ENCODE measurements at regions of chr1 and their contacts with region 1.

Region 1: GRCh38 chr1:202968840-202969295 is 1.8 kb upstream of the CYB5R1 start:
- DNase-seq: peak; percentile 40 to 55
- ATAC-seq: peak in 1 of 2 donors; percentile 26
- H3K4me3 ChIP-seq: no peak overlapping the region
- H3K27ac ChIP-seq: peak overlapping the region; percentile 98 to 100 (median 100)
- H3K4me1 ChIP-seq: peaks cover 29 to 34% of the 10 kb centered on the region in 2 donors
- H3K27me3 ChIP-seq: no peaks in the 10 kb centered on the region
- CTCF ChIP-seq: peak; percentile 37 to 66 (median 56)
- POLR2A ChIP-seq: no peak

Region 2: DNA sequence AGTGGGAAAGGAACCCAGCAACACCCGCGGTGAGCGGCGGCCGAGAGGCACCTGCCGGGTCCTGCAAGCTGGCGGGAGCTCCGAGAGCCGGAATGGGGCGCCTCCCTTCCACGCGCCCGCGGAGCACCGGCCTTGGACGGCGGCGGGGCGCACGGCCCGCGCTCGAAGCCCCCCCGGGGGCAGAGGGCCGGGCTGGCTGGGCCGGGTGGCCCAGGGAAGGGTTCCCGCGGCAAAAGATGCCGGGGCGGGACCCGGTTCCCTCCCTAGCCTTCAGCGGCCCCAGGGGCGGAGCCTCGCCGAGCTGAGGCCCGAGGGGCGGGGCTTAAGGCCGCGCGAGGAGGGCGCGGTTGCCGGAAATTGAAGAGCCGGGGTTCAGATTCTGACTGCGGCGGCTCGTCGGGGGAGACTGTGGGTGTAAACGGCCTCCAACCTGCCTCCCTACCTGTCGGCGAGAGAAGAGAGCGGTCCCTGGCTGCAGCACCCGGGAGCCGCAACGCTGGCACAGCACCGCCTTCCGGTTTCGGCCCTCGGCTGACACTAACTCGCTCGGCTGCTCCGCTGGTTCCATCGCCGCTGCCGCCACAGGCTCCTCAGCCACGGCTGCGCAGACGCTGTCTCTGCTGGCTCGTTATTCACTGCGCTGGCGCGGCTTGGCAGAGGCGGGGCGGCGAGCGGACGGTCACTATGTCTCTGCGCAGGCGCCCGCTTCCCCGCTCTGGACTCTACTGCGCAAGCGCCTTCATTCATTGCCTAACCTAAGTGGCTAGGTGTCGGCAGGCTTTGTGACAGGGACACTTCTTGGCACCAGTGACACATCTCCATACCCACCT is 80.1 kb before region 1 on chr1 and contains the start of gene RABIF:
- in situ Hi-C with region 1: no loop called
- intact Hi-C with region 1: loop called (anchors 2 kb)
- DNase-seq: peak; percentile 91 to 96
- ATAC-seq: peak; percentile 95 to 96
- H3K4me3 ChIP-seq: peak within 1 kb of the TSS; percentile 77 to 98 (median 90)
- H3K27ac ChIP-seq: peak within 1 kb of the TSS; percentile 93 to 99 (median 96)
- H3K4me1 ChIP-seq: peaks cover 9 to 13% of the 10 kb centered on the region in 2 donors
- H3K27me3 ChIP-seq: no peaks in the 10 kb centered on the region
- CTCF ChIP-seq: peak in 2 of 5 experiments; percentile 23 to 36
- POLR2A ChIP-seq: peak; percentile 85 to 87
- total RNA-seq, gene RABIF: 2.6 to 9.2 (median 3.9) TPM

Region 3: GRCh38 chr1:202944438-202944921 is 24.4 kb before region 1 on chr1:
- in situ Hi-C with region 1: no loop called
- intact Hi-C with region 1: no loop called
- DNase-seq: no peak
- ATAC-seq: no peak
- H3K4me3 ChIP-seq: no peak overlapping the region
- H3K27ac ChIP-seq: no peak overlapping the region
- H3K4me1 ChIP-seq: no peaks in the 10 kb centered on the region
- H3K27me3 ChIP-seq: no peaks in the 10 kb centered on the region
- CTCF ChIP-seq: no peak
- POLR2A ChIP-seq: no peak

Region 4: GRCh38 chr1:202957733-202958543 is 10.9 kb before region 1 on chr1 and contains the start of gene ADIPOR1:
- in situ Hi-C with region 1: no loop called
- intact Hi-C with region 1: loop called (anchors 1 kb)
- DNase-seq: peak; percentile 91 to 93
- ATAC-seq: peak; percentile 43 to 49
- H3K4me3 ChIP-seq: peak within 1 kb of the TSS; percentile 85 to 98 (median 94)
- H3K27ac ChIP-seq: peak within 1 kb of the TSS; percentile 98 to 100 (median 100)
- H3K4me1 ChIP-seq: peaks cover 79 to 80% of the 10 kb centered on the region in 2 donors
- H3K27me3 ChIP-seq: no peaks in the 10 kb centered on the region
- CTCF ChIP-seq: no peak
- POLR2A ChIP-seq: peak; percentile 97 to 98
- total RNA-seq, gene ADIPOR1: 103 to 133 (median 119) TPM

Region 5: GRCh38 chr1:203006948-203007871 is 38.3 kb after region 1 on chr1 and contains the start of gene TMEM183A:
- in situ Hi-C with region 1: no loop called
- intact Hi-C with region 1: loop called (anchors 2 kb)
- DNase-seq: peak; percentile 93 to 96
- ATAC-seq: peak; percentile 96 to 98
- H3K4me3 ChIP-seq: peak within 1 kb of the TSS; percentile 91 to 100 (median 98)
- H3K27ac ChIP-seq: peak within 1 kb of the TSS; percentile 93 to 99 (median 97)
- H3K4me1 ChIP-seq: peaks cover 17 to 22% of the 10 kb centered on the region in 2 donors
- H3K27me3 ChIP-seq: no peaks in the 10 kb centered on the region
- CTCF ChIP-seq: no peak
- POLR2A ChIP-seq: peak; percentile 95 to 97
- total RNA-seq, gene TMEM183A: 28.7 to 41.4 (median 30.6) TPM

Region 6: DNA sequence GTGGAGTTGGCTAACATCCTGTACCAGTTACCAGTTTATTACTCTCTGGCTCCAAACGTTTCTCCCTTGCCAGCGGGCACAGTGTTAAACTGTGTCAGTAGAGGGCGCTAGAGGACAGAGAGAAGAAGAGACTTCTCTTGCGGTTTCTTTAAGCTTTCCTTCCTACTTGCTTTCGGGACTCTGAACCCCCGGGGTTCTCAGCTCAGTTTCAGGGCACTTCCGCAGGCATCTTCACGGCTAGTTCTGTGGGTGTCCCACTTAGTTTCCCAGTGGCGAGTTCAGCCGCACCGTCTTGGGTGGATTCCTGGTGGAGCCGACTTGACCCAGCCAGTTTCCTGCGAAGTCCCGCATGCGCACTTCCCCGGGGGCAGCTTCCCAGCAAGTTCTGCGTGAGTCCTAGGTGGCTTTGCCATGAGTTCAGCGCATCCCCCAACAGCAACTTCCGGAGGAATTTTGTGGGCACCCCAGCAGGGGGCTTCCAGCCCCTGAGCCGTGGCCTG is 298.5 kb after region 1 on chr1:
- in situ Hi-C with region 1: no loop called
- intact Hi-C with region 1: loop called (anchors 2 kb)
- DNase-seq: peak; percentile 66 to 86
- ATAC-seq: peak; percentile 73 to 78
- H3K4me3 ChIP-seq: peak overlapping the region; percentile 62 to 70 (median 66)
- H3K27ac ChIP-seq: peak overlapping the region; percentile 86 to 93 (median 88)
- H3K4me1 ChIP-seq: peaks cover 34 to 35% of the 10 kb centered on the region in 2 donors
- H3K27me3 ChIP-seq: no peaks in the 10 kb centered on the region
- CTCF ChIP-seq: peak; percentile 93 to 97 (median 94)
- POLR2A ChIP-seq: peak in 1 of 2 donors; percentile 11

Region 7: GRCh38 chr1:203795441-203796235 is 826.8 kb after region 1 on chr1 and contains the starts of genes ZBED6 and ZC3H11A:
- in situ Hi-C with region 1: no loop called
- intact Hi-C with region 1: loop called (anchors 5 kb)
- DNase-seq: peak; percentile 99
- ATAC-seq: peak; percentile 93 to 95
- H3K4me3 ChIP-seq: peak within 1 kb of the TSS; percentile 75 to 91 (median 86)
- H3K27ac ChIP-seq: peak within 1 kb of the TSS; percentile 98 to 99 (median 98)
- H3K4me1 ChIP-seq: peaks cover 41 to 47% of the 10 kb centered on the region in 2 donors
- H3K27me3 ChIP-seq: no peaks in the 10 kb centered on the region
- CTCF ChIP-seq: peak in 1 of 5 experiments; percentile 27
- POLR2A ChIP-seq: peak; percentile 82 to 94
- total RNA-seq, gene ZBED6: 9.0 to 42.5 (median 27.6) TPM
- total RNA-seq, gene ZC3H11A: 71.0 to 131 (median 92.0) TPM

Measured in gastrocnemius medialis (tissue), 4 donors.